Stomach (tissue), 19 donors: ENCODE measurements at regions of chr6 and their contacts with region 1.

Region 1: GRCh38 chr6:138129190-138129589 is 22.0 kb upstream of the PERP start:
- DNase-seq: no peak
- H3K4me3 ChIP-seq: no peak overlapping the region
- H3K27ac ChIP-seq: no peak overlapping the region
- H3K4me1 ChIP-seq: peaks cover 0 to 10% (median 0%) of the 10 kb centered on the region in 4 donors
- H3K27me3 ChIP-seq: no peaks in the 10 kb centered on the region
- CTCF ChIP-seq: peak in 1 of 7 experiments; percentile 13
- EP300 ChIP-seq: no peak
- POLR2A ChIP-seq: no peak

Region 2: DNA sequence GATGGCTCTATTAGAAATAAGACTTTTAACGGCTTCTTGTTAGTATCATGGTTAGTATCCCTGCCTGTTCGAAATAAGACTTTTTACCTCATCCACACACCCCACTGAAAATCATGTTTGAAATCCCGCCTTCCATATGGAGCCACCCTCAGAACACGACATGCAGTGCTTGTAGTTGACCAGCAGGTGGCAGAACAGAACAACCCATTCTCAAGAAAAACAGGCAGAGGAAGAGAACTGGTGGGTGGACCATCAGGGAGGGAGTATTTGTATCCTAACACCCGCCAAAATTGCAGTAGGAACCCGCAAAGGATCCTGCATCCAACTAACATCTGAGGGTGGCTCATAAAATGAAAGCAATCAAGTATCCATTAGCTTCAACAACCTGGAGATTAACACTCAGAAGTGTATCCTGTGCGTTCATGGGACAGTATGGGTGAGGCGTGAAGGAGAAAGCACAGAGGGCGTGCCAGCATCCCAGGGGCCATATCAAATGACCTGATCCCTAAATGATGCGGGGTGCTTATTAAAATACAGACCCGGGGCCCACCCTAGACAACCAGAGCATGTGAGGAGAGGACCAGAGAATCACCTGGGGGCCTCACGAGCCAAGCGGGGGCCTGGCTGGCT is 459.7 kb after region 1 on chr6:
- intact Hi-C with region 1: loop called (anchors 10 kb)
- DNase-seq: peak; percentile 59 to 92
- H3K4me3 ChIP-seq: no peak overlapping the region
- H3K27ac ChIP-seq: no peak overlapping the region
- H3K4me1 ChIP-seq: peaks cover 0 to 24% (median 17%) of the 10 kb centered on the region in 4 donors
- H3K27me3 ChIP-seq: no peaks in the 10 kb centered on the region
- CTCF ChIP-seq: peak in 5 of 7 experiments; percentile 90 to 95 (median 92)
- EP300 ChIP-seq: no peak
- POLR2A ChIP-seq: no peak